ENCODE measurements at regions of chr17 and their contacts with region 1.

Region 1: DNA sequence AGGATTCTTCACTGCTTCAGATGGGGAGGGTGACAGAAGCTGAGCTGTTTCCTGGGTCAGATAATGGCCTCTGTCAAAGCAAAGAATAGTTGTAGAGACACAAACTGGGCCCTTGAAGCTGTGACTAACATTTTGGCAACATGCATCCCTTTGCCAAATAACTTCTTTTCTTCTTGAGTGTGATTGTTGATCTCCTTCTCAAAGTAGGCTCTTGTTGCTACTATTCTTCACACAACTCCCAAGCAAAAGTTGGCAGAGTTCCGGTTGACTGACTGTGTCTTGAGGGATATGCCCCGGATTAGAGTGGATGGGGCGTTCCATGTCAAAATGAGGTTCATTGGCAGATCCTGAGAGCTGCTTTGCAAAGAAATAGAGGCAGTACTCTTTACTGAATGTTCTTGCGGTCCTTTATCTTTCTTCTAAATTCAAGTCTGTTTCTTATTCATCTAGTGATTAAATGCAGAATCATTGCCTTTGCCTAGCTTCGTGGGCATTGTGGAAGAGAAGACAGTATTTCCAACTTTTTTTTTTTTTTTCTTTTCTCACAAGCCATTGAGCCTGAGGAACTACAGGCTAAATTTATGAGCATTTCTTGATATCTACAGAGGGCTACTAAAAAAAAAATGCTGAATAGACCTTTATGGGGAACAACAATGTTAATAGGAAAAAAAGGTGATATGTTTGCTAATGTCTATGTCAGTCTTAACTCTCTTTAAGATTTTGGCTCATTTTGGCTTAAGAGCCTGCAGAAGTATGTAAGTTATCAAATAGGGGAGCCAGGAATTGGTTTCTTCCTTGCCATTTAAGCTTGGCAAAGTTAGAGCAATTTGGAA is 5.8 kb downstream of the WIPF2 start:
- DNase-seq: no peak
- H3K4me3 ChIP-seq: no peak overlapping the region
- H3K27ac ChIP-seq: no peak overlapping the region
- H3K4me1 ChIP-seq: peaks cover 11% of the 10 kb centered on the region; the same call in 1 of the 2 replicates
- H3K27me3 ChIP-seq: no peaks in the 10 kb centered on the region
- CTCF ChIP-seq: no peak

Region 2: DNA sequence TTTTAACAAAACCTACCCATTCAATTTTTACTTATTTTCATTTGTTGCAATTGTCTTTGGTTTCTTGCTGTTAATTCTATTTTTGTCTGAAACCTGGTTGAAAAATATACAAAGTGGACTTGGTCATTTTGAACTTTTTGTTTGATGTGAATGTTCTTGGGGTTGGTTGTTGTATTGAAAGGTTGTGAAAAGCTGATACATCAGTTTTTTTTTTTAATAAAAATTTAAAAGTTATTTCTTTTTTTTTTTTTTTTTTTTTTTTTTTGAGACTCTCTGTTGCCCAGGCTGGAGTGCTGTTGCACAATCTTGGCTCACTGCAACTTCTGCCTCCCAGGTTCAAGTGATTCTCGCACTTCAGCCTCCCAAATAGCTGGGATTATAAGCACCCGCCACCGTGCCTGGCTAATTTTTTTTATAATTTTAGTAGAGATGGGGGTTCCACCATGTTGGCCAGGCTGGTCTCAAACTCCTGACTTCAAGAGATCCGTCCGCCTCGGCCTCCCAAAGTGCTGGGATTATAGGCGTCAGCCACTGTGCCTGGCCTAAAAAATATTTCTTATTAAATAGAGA is 23.1 kb after region 1 on chr17:
- CTCF ChIA-PET with region 1: no interaction called
- POLR2A ChIA-PET with region 1: interaction called, 11 read pairs
- intact Hi-C with region 1: no loop called
- DNase-seq: no peak
- H3K4me3 ChIP-seq: no peak overlapping the region
- H3K27ac ChIP-seq: no peak overlapping the region
- H3K4me1 ChIP-seq: peaks cover 6% of the 10 kb centered on the region; the same call in 1 of the 2 replicates
- H3K27me3 ChIP-seq: no peaks in the 10 kb centered on the region
- CTCF ChIP-seq: no peak